T-cell (primary cell): ENCODE measurements at regions of chr11 and their contacts with region 1.

Region 1: DNA sequence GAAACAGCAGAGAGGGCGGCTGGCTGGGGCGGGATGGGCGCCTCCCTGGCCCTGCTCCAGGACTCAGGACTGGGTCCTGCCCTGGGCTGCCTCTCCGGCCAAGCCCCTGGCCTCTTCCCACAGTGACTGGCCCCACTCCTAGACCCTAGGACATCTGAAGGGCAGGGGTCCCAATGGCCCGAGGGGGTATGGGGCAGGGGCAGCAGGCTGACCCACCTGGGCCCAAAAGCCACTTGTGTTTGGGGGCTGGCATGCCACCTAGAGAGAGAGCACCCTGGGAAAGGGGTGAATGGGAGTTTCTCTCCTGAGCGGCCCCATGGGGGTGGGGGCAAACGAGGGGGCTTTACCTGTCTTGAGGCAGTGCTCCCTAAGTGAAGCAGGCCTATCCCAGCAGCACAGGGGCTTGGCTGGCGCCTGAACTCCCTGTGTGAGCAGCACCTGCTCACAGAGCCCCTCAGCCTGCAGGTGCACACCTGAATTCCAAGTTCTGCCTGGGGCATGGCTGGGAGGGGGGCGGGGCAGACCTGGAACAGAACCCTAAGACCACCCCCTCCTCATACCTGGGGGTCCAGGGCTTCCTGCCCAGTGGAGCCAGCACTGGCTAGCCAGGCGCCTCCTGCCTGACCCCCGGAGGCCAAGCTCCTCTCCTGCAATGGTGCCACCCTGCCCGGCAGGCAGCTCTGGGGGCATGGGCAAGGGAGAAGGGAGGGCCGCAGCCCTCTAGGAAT is 16.9 kb downstream of the DUSP8 start:
- DNase-seq: peak in 1 of 35 experiments; percentile 29
- ATAC-seq: no peak
- H3K4me3 ChIP-seq: no peak overlapping the region
- H3K4me3 Mint-ChIP-seq: no peak overlapping the region
- H3K27ac ChIP-seq: no peak overlapping the region
- H3K27ac Mint-ChIP-seq: no peak overlapping the region
- H3K4me1 ChIP-seq: no peaks in the 10 kb centered on the region
- H3K4me1 Mint-ChIP-seq: peaks cover 0 to 9% (median 0%) of the 10 kb centered on the region in 3 donors
- H3K27me3 ChIP-seq: peaks cover 2 to 22% of the 10 kb centered on the region in 2 experiments
- H3K27me3 Mint-ChIP-seq: peaks cover 4% of the 10 kb centered on the region in 2 donors

Region 2: DNA sequence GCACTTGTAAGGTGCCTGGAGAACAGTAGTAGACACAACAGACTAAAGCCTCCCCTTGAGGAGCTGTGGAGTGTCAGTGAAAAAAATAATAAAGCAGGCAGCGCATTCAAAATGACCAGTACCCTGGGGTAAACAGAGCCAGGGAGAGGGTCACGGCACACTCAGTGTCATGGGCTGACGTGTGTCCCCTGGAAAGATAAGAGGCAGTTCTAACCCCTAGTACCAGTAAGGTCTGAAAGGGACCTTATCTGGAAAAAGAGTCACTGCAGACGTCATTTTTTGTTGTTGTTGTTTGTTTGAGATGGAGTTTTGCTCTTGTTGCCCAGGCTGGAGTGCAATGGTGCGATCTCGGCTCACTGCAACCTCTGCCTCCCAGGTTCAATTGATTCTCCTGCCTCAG is 15.1 kb before region 1 on chr11:
- CTCF ChIA-PET with region 1: no interaction called
- POLR2A ChIA-PET with region 1: interaction called in 1 of 2 experiments, 10 read pairs
- DNase-seq: no peak
- ATAC-seq: no peak
- H3K4me3 ChIP-seq: no peak overlapping the region
- H3K4me3 Mint-ChIP-seq: no peak overlapping the region
- H3K27ac ChIP-seq: no peak overlapping the region
- H3K27ac Mint-ChIP-seq: no peak overlapping the region
- H3K4me1 ChIP-seq: peaks cover 0 to 24% of the 10 kb centered on the region in 2 experiments
- H3K4me1 Mint-ChIP-seq: peaks cover 21 to 22% (median 21%) of the 10 kb centered on the region in 3 donors
- H3K27me3 ChIP-seq: peaks cover 2 to 38% of the 10 kb centered on the region in 2 experiments
- H3K27me3 Mint-ChIP-seq: peaks cover 0 to 9% of the 10 kb centered on the region in 2 donors